ENCODE measurements at regions of chr10 and their contacts with region 1.

Region 1: DNA sequence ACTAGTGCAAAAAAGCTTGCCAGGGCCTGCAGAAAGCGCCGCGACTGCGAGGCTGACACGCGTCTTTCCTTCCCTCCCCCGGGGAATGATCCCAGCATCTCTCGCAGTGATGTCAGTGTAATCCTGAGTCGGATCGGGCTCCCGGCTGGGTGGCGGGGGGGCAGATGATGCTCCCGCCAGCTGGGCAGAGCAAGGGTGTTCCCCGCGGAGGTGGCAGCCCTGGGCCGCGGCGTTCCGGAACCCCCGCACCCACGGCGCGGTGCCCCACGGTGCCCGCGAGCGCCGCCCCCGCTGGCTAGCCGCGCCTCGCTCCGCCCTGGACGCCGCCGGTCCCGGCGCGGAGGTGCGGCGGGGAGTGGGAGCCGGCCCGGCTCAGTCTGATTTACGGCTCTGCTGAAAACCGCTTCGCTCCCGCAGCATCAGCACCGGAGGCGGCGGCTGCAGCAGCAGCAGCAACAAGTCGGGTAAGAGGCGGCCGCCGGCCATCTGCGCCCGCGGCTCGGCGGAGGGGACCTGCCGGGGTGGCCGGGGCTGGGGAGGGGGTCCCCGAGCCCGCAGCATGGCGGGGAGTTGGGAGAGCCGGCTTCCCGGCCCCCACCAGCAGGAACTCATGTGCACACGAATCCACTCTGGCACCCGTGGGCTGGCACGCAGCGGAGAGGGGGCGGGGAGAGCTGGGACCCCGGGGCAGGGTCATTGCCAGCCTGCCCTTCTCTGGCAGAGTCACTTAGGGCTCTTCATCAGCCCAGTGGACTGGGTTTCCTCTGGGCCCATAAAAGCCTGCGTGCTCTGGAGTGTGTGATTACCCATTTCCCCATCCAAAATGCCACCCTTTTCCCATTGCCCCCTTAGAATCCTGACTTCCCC is at the start of gene ZNF365:
- DNase-seq: peak; percentile 89
- ATAC-seq: peak; percentile 79
- H3K4me3 ChIP-seq: peak within 1 kb of the TSS; percentile 75
- H3K27ac ChIP-seq: no peak within 1 kb of the TSS
- H3K4me1 ChIP-seq: peaks cover 45% of the 10 kb centered on the region
- H3K27me3 ChIP-seq: no peaks in the 10 kb centered on the region
- CTCF ChIP-seq: no peak; the same call in 1 of the 2 replicates
- total RNA-seq, gene ZNF365: 19.0 and 20.2 TPM in 2 replicates

Region 2: GRCh38 chr10:62414359-62414758 is 40.1 kb after region 1 on chr10:
- CTCF ChIA-PET with region 1: interaction called, 11 read pairs
- POLR2A ChIA-PET with region 1: interaction called, 6 read pairs
- intact Hi-C with region 1: loop called (anchors 2 kb)
- DNase-seq: peak; percentile 88
- ATAC-seq: peak; percentile 57
- H3K4me3 ChIP-seq: no peak overlapping the region
- H3K27ac ChIP-seq: no peak overlapping the region
- H3K4me1 ChIP-seq: peaks cover 9% of the 10 kb centered on the region
- H3K27me3 ChIP-seq: no peaks in the 10 kb centered on the region
- CTCF ChIP-seq: peak; percentile 91

Measured in PC-3 (cell line).